B cell (primary cell): ENCODE measurements at regions of chr3 and their contacts with region 1.

Region 1: GRCh38 chr3:11651900-11652299 is 8.2 kb upstream of the VGLL4 start:
- DNase-seq: peak; percentile 61
- ATAC-seq: no peak
- H3K4me3 ChIP-seq: no peak overlapping the region
- H3K4me3 Mint-ChIP-seq: no peak overlapping the region
- H3K27ac ChIP-seq: no peak overlapping the region
- H3K27ac Mint-ChIP-seq: no peak overlapping the region
- H3K4me1 ChIP-seq: peaks cover 3 to 8% of the 10 kb centered on the region in 2 donors
- H3K4me1 Mint-ChIP-seq: peaks cover 11% of the 10 kb centered on the region
- H3K27me3 ChIP-seq: no peaks in the 10 kb centered on the region
- H3K27me3 Mint-ChIP-seq: no peaks in the 10 kb centered on the region
- CTCF ChIP-seq: peak; percentile 81

Region 2: DNA sequence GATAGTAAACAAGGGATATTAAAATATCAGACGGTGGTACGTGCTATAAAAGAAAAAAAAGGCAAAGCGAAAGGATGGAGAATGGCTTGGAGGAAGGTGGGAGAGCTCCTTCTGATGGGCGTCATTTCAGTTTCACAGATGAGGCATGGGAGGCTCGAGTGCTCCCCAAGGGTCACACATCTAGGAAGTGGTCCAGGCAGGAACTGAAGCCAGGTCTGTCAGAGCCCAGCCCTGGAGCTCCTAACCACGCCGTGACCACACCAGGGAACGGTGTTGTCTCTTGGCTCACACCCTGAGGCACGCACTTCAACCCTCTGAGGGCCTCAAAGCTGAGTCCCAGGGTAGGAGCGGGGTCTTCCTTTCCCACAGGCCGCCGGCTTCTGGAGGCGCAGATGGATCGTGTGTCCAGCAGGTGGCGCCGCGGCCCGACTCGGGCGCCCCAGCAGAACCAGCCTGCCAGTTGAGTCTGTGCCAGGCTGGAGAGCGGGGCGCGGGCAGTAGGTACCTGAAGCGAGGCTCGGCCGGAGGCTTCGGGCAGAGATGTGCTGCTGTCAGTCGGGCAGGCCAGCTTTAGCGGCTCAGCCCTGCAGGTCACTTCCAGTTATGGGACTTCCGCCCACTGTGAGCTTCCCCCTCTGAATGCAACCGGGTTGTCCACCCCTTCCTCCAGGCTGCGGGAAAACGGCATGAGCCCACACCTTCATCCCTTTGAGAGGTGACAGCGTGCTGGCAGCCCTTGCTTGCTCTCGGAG is 591.2 kb before region 1 on chr3:
- CTCF ChIA-PET with region 1: interaction called, 18 read pairs
- POLR2A ChIA-PET with region 1: no interaction called
- intact Hi-C with region 1: no loop called
- DNase-seq: peak; percentile 67
- ATAC-seq: peak; percentile 56
- H3K4me3 ChIP-seq: no peak overlapping the region
- H3K4me3 Mint-ChIP-seq: no peak overlapping the region
- H3K27ac ChIP-seq: no peak overlapping the region
- H3K27ac Mint-ChIP-seq: no peak overlapping the region
- H3K4me1 ChIP-seq: peaks cover 0 to 6% of the 10 kb centered on the region in 2 donors
- H3K4me1 Mint-ChIP-seq: peaks cover 4% of the 10 kb centered on the region
- H3K27me3 ChIP-seq: peaks cover 0 to 18% (median 8%) of the 10 kb centered on the region in 4 experiments
- H3K27me3 Mint-ChIP-seq: peaks cover 39% of the 10 kb centered on the region
- CTCF ChIP-seq: peak; percentile 83

Region 3: DNA sequence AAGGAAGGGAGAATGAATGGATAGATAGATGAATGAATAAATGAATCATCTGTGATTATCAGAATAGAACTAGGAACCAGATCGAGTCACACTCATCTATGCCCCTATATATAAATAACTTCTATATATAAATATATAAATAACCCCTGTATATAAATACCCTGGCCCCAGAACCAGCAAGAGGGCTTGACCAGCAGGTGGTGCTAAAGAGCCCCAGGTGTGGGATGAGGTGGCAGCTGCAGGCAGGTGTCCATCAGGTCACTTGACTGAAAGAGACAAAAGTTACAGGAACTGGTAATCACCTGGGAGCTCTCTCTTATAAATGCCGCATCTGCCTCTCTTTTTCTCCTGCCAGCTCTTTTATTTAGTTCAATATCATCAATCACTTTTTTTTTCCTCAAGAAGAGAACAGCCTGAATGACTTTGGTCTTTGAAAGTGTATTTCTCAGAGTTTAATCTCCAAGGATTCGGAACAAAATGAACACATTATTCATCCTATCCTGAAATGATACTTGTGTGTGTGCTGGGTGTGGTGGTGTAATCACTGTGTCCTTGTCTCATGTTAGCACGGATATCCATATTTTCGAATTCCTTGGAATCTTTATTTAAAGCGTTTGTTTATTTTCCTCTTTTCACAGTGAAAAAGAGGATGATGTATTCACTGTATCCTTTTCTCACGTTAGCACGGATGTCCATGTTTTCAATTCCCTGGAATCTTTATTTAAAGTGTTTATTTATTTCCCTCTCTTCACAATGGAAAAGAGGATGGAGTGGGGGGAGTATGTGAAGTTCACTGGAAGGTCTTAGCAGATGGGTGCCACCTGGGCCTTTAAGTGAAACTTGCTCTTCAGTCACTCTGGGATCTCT is 415.1 kb before region 1 on chr3:
- CTCF ChIA-PET with region 1: interaction called, 27 read pairs
- POLR2A ChIA-PET with region 1: no interaction called
- intact Hi-C with region 1: loop called (anchors 1 kb)
- DNase-seq: peak; percentile 78
- ATAC-seq: peak; percentile 79
- H3K4me3 ChIP-seq: no peak overlapping the region
- H3K4me3 Mint-ChIP-seq: no peak overlapping the region
- H3K27ac ChIP-seq: no peak overlapping the region
- H3K27ac Mint-ChIP-seq: no peak overlapping the region
- H3K4me1 ChIP-seq: no peaks in the 10 kb centered on the region
- H3K4me1 Mint-ChIP-seq: no peaks in the 10 kb centered on the region
- H3K27me3 ChIP-seq: peaks cover 0 to 5% (median 2%) of the 10 kb centered on the region in 4 experiments
- H3K27me3 Mint-ChIP-seq: peaks cover 30% of the 10 kb centered on the region
- CTCF ChIP-seq: peak; percentile 97

Region 4: DNA sequence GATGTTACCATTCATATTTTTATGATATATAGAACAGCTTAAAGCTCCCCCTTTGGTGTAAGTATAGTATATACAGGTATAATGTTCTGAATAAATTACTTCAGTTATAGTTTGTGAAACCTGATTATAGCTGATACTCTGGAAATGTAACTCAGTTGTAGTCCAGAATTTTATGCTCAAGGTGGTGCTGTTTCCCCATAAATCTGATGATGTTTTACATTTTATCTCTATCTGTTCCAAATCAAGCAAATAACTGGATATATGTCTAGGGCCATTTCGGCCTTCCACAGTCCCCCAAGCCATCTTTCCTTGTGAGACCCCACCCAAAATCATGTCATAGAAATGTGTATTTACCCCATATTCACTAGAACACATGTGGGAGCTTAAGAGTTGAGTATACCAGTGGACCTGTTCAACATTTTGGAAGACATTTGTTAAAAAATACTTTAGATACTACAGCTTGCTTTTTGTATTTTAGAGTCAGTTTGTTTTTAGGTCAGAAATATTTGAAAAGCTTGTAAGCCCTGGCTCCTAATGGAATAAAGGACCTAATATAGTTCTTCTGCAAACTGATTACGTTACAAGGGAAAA is 272.6 kb before region 1 on chr3:
- CTCF ChIA-PET with region 1: interaction called, 85 read pairs
- POLR2A ChIA-PET with region 1: no interaction called
- intact Hi-C with region 1: loop called (anchors 1 kb)
- DNase-seq: peak; percentile 53
- ATAC-seq: no peak
- H3K4me3 ChIP-seq: no peak overlapping the region
- H3K4me3 Mint-ChIP-seq: no peak overlapping the region
- H3K27ac ChIP-seq: no peak overlapping the region
- H3K27ac Mint-ChIP-seq: no peak overlapping the region
- H3K4me1 ChIP-seq: no peaks in the 10 kb centered on the region
- H3K4me1 Mint-ChIP-seq: no peaks in the 10 kb centered on the region
- H3K27me3 ChIP-seq: no peaks in the 10 kb centered on the region
- H3K27me3 Mint-ChIP-seq: no peaks in the 10 kb centered on the region
- CTCF ChIP-seq: peak; percentile 64

Region 5: DNA sequence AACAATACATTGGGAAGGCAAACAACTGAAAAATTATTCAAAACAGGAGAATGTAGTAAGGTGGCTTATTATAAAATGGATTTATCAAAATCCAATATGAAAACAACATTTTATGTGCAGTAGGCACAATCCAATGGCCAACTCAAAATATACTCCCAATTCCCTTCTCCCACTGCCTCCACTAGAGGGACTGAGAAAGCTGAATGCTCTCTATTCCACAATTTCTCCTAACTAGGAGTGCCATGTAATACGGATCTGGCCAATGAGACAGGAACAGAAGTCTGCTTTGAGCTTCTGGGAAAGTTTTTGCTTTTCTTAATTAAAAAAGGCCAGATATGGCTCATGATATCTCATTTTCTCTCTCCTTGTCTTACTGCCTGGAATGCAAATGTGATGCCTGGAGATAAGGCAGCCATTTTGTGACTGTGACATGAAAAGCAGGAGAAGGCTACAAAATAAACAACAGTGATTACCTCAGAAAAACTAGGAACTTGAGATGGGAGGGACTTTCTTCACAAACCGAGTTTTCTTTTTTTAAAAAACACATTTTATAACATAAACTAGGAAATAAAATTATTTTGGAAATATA is 10.6 kb after region 1 on chr3:
- CTCF ChIA-PET with region 1: interaction called, 11 read pairs
- POLR2A ChIA-PET with region 1: no interaction called
- intact Hi-C with region 1: no loop called
- DNase-seq: no peak
- ATAC-seq: no peak
- H3K4me3 ChIP-seq: no peak overlapping the region
- H3K4me3 Mint-ChIP-seq: no peak overlapping the region
- H3K27ac ChIP-seq: no peak overlapping the region
- H3K27ac Mint-ChIP-seq: no peak overlapping the region
- H3K4me1 ChIP-seq: no peaks in the 10 kb centered on the region
- H3K4me1 Mint-ChIP-seq: no peaks in the 10 kb centered on the region
- H3K27me3 ChIP-seq: no peaks in the 10 kb centered on the region
- H3K27me3 Mint-ChIP-seq: no peaks in the 10 kb centered on the region
- CTCF ChIP-seq: no peak

Region 6: DNA sequence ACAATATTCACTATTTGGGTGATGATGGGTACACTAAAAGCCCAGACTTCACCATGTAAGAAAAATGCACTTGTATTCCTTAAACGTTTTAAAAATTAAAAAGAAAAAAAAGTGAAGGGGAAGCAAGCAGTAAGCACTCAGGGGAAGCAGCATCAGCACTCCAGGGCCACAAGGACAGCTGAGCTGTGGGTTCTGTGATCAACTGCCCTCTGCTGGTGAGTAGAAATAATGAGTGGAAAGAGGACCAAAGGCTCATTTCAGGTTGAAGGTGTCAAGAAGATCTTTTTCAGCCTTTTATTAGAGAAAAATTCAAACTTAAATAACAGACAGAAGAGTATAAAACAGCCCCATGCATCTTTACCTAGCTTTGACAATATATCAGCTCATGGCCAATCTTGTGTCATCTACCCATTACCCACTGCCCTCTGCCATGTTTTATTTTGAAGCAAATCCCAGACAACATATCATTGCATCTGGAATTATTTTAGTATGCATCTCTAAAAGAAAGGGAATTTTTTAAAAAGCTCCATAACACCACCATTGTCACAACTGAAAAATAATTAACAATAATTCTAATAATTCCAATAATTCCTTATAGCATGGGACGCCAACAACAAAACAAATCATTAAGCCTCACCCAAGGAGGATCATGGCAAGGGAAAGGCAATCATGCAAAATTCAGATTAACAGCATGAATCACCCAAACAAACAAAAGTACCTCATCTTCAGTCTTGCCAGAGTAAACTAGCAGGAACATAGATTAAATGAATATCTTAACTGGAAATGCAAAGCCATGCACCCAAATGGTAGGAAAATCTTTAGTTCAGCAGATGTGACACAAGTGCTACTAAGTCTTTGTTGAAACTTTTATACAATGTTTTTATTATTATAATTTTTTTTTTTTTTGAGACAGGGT is 152.3 kb after region 1 on chr3:
- CTCF ChIA-PET with region 1: interaction called, 21 read pairs
- POLR2A ChIA-PET with region 1: no interaction called
- intact Hi-C with region 1: loop called (anchors 1 kb)
- DNase-seq: peak; percentile 55
- ATAC-seq: peak; percentile 75
- H3K4me3 ChIP-seq: no peak overlapping the region
- H3K4me3 Mint-ChIP-seq: no peak overlapping the region
- H3K27ac ChIP-seq: no peak overlapping the region
- H3K27ac Mint-ChIP-seq: no peak overlapping the region
- H3K4me1 ChIP-seq: no peaks in the 10 kb centered on the region
- H3K4me1 Mint-ChIP-seq: no peaks in the 10 kb centered on the region
- H3K27me3 ChIP-seq: no peaks in the 10 kb centered on the region
- H3K27me3 Mint-ChIP-seq: no peaks in the 10 kb centered on the region
- CTCF ChIP-seq: peak; percentile 82